ENCODE measurements at regions of chr1 and their contacts with region 1.

Region 1: GRCh38 chr1:78145105-78145580 is 99.4 kb downstream of the GIPC2 start:
- DNase-seq: peak; percentile 60
- H3K4me3 Mint-ChIP-seq: no peak overlapping the region
- H3K27ac Mint-ChIP-seq: no peak overlapping the region
- H3K4me1 Mint-ChIP-seq: peaks cover 21% of the 10 kb centered on the region
- H3K27me3 Mint-ChIP-seq: peaks cover 3% of the 10 kb centered on the region

Region 2: DNA sequence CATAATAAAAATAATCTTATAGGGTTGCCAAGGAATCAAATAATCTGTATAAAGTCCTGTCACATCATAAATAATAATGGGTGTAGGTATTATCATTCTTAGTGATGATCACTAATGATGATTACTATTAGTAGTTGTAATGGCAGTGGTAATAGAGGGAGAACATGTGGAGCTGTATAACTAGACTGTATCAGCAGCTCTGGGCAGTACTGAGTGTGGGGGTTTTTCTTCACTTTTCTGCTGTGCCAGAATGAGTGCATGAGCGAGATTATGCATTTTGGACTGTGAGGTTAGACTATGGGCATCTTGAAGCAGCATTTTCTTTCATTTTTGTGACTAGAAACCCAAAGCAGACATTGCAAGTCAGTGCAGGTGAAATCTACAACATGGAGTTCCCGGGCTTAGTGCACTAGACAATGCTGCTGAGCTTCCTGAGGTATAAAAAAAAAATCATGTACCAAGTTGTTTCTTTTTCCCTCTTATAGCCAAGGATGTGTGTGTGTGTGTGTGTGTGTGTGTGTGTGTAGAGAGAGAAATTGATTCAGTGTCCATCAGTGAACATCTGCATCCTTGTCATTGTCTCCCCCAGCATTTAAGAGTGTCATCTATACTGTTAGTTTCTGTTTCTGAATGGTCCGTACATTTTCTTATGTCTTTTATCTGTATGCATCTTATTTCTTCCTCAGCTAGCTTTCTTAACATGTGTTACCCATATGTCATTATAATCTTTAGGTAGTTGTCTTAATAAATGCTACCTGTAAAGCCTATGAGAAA is 12.8 kb before region 1 on chr1:
- CTCF ChIA-PET with region 1: interaction called, 60 read pairs
- intact Hi-C with region 1: no loop called
- DNase-seq: no peak
- H3K4me3 Mint-ChIP-seq: no peak overlapping the region
- H3K27ac Mint-ChIP-seq: no peak overlapping the region
- H3K4me1 Mint-ChIP-seq: no peaks in the 10 kb centered on the region
- H3K27me3 Mint-ChIP-seq: no peaks in the 10 kb centered on the region

Region 3: GRCh38 chr1:78333502-78333901 is 188.4 kb after region 1 on chr1:
- CTCF ChIA-PET with region 1: interaction called, 5 read pairs
- intact Hi-C with region 1: loop called (anchors 10 kb)
- DNase-seq: peak; percentile 8
- H3K4me3 Mint-ChIP-seq: no peak overlapping the region
- H3K27ac Mint-ChIP-seq: no peak overlapping the region
- H3K4me1 Mint-ChIP-seq: no peaks in the 10 kb centered on the region
- H3K27me3 Mint-ChIP-seq: peaks cover 2% of the 10 kb centered on the region

Measured in activated naive CD4-positive, alpha-beta T cell treated with anti-CD3 and anti-CD28 coated beads for 36 hours (primary cell).